Ascending aorta (tissue), 2 donors: ENCODE measurements at regions of chr10 and their contacts with region 1.

Region 1: DNA sequence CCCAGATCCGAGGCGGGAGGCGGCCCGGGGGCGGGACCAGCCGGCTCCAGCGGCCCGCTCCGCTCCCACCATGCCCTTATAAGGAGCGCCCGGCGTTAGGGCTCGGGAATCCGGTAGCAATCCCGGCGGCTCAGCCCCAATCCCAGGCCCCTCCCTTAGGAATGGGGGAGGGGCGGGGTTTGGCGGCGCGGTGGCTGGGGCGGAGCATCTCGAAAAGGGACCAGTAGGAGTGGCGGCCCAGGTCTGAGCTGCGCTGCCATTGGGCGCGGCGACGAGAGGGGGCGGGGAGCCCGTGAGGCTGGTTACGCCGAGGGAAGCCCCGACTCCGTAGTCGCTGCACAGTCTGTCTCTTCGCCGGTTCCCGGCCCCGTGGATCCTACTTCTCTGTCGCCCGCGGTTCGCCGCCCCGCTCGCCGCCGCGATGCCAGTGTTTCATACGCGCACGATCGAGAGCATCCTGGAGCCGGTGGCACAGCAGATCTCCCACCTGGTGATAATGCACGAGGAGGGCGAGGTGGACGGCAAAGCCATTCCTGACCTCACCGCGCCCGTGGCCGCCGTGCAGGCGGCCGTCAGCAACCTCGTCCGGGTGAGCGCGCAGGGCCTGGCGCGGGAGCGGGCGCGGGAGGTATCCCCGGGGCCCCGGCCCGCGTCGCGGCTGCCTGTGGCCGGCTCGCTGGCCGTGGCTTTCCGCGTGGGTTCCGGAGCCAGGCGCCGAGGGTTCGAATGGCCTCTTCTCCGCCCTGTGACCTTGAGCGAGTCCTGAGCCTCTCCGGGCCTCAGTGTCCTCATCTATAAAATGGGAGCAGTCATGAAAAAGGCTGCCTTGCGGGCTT is at the start of gene VCL:
- DNase-seq: peak; percentile 93 to 99
- H3K4me3 ChIP-seq: peak within 1 kb of the TSS; percentile 87 to 91
- H3K27ac ChIP-seq: peak within 1 kb of the TSS; percentile 95
- H3K4me1 ChIP-seq: peaks cover 0 to 16% of the 10 kb centered on the region in 2 donors
- H3K27me3 ChIP-seq: no peaks in the 10 kb centered on the region
- CTCF ChIP-seq: no peak
- total RNA-seq, gene VCL: 333 TPM

Region 2: DNA sequence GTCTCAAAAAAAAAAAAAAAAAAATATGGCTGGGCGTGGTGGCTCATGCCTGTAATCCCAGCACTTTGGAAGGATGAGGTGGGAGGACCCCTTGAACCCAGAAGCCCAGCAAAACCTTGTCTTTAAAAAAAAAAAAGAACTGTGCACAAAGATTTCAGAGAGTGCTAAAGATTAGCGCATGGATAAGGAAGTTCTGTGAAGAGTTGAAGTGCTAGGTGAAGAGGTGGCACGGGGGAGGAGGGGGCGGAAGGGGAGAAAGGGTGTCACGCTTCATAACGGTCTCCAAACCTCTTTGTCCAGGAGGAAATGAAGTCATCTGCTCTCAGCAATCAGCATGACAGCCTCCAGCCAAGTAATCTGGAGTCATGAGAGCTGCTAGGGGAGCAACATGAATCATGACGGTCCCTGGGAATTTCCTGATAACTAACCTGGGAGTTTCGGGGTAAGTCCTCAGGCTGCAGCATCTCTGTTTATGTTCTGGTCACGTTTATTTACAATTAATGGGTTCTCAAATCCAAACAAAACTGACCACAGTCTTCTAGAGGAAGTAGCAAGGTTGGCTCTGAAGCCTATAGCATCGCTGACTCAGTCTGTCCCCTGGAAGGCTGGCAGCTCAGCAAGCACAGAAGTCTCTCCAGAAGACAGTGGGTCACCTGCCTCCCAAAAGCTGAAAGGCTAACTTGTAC is 89.0 kb before region 1 on chr10:
- intact Hi-C with region 1: loop called (anchors 5 kb)
- DNase-seq: peak in 1 of 2 donors; percentile 80
- H3K4me3 ChIP-seq: no peak overlapping the region
- H3K27ac ChIP-seq: peak overlapping the region; percentile 5 to 22
- H3K4me1 ChIP-seq: peaks cover 0 to 35% of the 10 kb centered on the region in 2 donors
- H3K27me3 ChIP-seq: no peaks in the 10 kb centered on the region
- CTCF ChIP-seq: no peak

Region 3: GRCh38 chr10:73965890-73966768 is 31.9 kb before region 1 on chr10:
- intact Hi-C with region 1: loop called (anchors 1 kb)
- DNase-seq: peak; percentile 76 to 95
- H3K4me3 ChIP-seq: peak overlapping the region in 1 of 2 donors; percentile 29
- H3K27ac ChIP-seq: peak overlapping the region; percentile 92 to 94
- H3K4me1 ChIP-seq: peaks cover 11 to 27% of the 10 kb centered on the region in 2 donors
- H3K27me3 ChIP-seq: no peaks in the 10 kb centered on the region
- CTCF ChIP-seq: no peak

Region 4: GRCh38 chr10:74039561-74040145 is 41.6 kb after region 1 on chr10:
- intact Hi-C with region 1: loop called (anchors 2 kb)
- DNase-seq: peak in 1 of 2 donors; percentile 75
- H3K4me3 ChIP-seq: no peak overlapping the region
- H3K27ac ChIP-seq: peak overlapping the region; percentile 82 to 85
- H3K4me1 ChIP-seq: peaks cover 10 to 45% of the 10 kb centered on the region in 2 donors
- H3K27me3 ChIP-seq: no peaks in the 10 kb centered on the region
- CTCF ChIP-seq: no peak

Region 5: DNA sequence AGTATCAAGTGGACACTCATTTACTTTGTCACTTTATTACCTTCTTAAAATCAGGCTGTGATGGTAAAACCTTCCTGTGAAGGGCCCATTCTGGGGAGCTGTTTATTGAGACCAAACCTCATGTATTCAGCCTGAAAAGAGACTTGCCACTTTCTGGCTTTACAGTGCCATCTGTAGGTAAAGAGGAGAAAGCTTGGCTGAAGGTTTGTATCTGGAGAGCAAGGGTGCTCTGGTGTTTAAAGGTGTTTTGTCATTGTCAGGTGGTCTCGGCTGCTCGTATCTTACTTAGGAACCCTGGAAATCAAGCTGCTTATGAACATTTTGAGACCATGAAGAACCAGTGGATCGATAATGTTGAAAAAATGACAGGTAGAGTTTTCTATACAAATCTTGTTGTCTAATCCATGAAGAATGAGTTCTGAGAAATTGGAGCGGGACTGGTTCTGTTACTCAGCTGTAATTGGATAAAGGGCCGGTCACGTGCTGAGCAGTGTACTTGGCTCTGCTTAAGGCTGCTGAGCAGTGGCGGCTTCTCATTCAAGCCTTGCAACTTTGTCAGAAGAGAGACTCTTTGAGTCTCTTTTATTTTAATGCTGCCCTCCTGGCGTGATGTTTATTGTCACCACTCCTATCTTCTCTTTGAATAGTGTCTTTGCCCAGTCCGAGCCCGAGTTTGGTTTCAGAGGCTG is 105.7 kb after region 1 on chr10:
- intact Hi-C with region 1: no loop called
- DNase-seq: no peak
- H3K4me3 ChIP-seq: no peak overlapping the region
- H3K27ac ChIP-seq: peak overlapping the region in 1 of 2 donors; percentile 14
- H3K4me1 ChIP-seq: no peaks in the 10 kb centered on the region
- H3K27me3 ChIP-seq: no peaks in the 10 kb centered on the region
- CTCF ChIP-seq: peak; percentile 18 to 31 (median 18)